ENCODE measurements at regions of chr2 and their contacts with region 1.

Region 1: DNA sequence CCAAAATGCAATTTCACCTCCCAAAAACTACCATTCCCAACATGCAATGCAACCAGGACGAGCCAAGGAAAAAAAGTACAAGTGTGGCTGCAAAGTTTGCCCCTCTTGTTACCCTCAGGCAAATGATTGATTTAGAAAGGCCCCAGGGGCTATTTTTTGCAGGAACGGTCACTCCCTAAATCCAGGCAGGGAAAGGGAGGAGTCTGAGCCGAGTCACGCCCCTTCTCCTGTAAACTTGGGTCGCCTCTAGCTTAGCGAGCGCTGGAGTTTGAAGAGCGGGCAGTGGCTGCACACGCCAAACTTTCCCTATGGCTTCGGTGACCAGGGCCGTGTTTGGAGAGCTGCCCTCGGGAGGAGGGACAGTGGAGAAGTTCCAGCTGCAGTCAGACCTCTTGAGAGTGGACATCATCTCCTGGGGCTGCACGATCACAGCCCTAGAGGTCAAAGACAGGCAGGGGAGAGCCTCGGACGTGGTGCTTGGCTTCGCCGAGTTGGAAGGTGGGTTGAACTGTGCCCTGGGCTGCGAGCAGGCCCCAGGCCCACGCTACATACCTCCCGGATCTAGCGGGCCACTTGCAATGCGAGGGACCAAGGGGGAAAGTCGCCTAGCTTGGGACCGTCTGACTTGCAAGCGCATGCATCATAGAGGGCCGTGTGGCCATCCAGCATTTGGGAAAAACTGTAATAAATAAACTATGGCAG is at the start of gene GALM:
- DNase-seq: peak in 13 of 14 experiments; percentile 10 to 75 (median 39)
- ATAC-seq: peak; percentile 28
- H3K4me3 ChIP-seq: peak within 1 kb of the TSS; percentile 81
- H3K4me3 Mint-ChIP-seq: peak within 1 kb of the TSS; percentile 80
- H3K27ac ChIP-seq: peak within 1 kb of the TSS; percentile 58 to 77
- H3K27ac Mint-ChIP-seq: peak within 1 kb of the TSS; percentile 81
- H3K4me1 ChIP-seq: peaks cover 75% of the 10 kb centered on the region
- H3K4me1 Mint-ChIP-seq: peaks cover 65% of the 10 kb centered on the region
- H3K27me3 ChIP-seq: no peaks in the 10 kb centered on the region
- H3K27me3 Mint-ChIP-seq: no peaks in the 10 kb centered on the region
- CTCF ChIP-seq: no peak
- total RNA-seq, gene GALM: 5.9 to 7.0 TPM

Region 2: DNA sequence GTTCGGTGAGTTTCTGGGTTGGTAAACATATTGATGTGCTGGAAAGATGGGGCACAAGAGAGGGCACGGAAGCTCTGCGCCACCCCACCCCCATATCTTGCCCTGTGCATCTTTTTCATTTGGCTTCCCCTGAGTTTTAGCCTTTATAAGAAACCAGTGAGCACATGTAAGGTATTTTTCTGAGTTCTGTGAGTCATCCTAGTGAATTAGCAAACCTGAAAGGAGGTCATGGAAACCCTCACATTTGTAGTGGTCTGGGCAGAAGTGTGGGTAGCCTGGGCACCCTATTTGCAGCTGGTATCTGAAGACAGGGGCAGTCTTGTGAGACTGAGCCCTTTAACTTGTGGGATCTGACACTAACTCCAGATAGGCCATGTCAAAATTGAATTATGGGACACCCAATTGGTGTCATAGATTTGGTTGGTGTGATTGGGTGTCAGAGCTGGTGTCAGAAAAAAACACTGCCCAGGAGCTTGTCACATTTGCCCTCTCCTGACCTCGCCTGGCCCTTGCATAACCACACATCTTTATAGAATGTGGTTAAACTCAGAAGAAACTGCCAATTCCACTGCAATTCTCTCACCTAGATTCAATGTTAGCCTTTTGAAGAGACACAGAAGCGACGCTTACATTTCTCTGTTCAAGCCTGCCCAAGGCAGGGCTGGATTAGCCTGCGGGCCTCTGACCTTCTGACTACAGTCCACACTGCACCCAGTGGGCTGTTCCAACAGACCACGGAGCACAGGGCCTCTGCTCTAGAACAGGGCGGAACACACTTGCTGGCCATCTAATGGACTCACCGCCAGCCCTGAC is 12.1 kb before region 1 on chr2:
- CTCF ChIA-PET with region 1: interaction called, 12 read pairs
- POLR2A ChIA-PET with region 1: interaction called, 32 read pairs
- intact Hi-C with region 1: no loop called
- DNase-seq: peak in 10 of 14 experiments; percentile 19 to 82 (median 52)
- ATAC-seq: peak; percentile 78
- H3K4me3 ChIP-seq: no peak overlapping the region
- H3K4me3 Mint-ChIP-seq: no peak overlapping the region
- H3K27ac ChIP-seq: peak overlapping the region in 1 of 2 donors; percentile 64
- H3K27ac Mint-ChIP-seq: peak overlapping the region; percentile 80
- H3K4me1 ChIP-seq: peaks cover 52% of the 10 kb centered on the region
- H3K4me1 Mint-ChIP-seq: peaks cover 33% of the 10 kb centered on the region
- H3K27me3 ChIP-seq: no peaks in the 10 kb centered on the region
- H3K27me3 Mint-ChIP-seq: no peaks in the 10 kb centered on the region
- CTCF ChIP-seq: no peak

Region 3: GRCh38 chr2:38682008-38682575 is 16.1 kb after region 1 on chr2:
- CTCF ChIA-PET with region 1: interaction called, 15 read pairs
- POLR2A ChIA-PET with region 1: interaction called, 47 read pairs
- intact Hi-C with region 1: loop called in 1 of 2 experiments (anchors 1 kb)
- DNase-seq: peak in 4 of 14 experiments; percentile 28 to 82 (median 76)
- ATAC-seq: peak; percentile 88
- H3K4me3 ChIP-seq: peak overlapping the region; percentile 31
- H3K4me3 Mint-ChIP-seq: peak overlapping the region; percentile 49
- H3K27ac ChIP-seq: peak overlapping the region; percentile 71 to 78
- H3K27ac Mint-ChIP-seq: peak overlapping the region; percentile 86
- H3K4me1 ChIP-seq: peaks cover 55% of the 10 kb centered on the region
- H3K4me1 Mint-ChIP-seq: peaks cover 50% of the 10 kb centered on the region
- H3K27me3 ChIP-seq: no peaks in the 10 kb centered on the region
- H3K27me3 Mint-ChIP-seq: no peaks in the 10 kb centered on the region
- CTCF ChIP-seq: peak; percentile 23

Region 4: DNA sequence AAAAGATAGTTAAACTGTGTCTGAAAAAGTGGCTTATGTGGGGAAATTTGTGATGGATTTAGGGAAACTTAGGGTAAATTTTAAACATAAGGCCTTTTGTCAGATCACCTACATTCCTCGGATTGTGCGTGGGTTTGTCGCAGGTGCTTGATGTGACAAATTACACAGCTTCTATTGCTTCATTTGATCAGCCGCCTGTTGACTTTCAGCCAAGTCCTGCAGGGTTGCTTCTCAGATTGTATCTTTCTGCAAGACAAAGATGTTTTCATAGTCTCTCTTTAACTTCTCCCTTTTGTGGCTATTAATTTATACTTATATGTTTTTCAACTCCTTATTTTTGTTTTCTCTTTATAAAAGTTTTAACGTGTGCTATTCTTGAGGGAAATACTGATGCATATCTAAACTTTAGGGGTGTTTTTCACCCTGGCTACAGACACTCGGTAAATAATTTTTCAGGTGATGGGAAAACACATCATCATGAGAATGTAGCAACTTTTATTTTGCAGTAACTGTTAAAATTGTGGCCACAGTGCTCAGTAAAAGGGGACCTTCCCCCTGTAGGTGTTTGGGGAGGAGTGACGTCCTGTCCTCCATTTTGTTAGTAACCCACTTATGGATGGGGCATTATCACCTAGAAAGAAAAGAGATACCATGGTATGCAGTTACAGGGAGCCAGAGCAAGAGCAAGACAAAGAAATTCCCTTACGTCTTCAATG is 31.3 kb after region 1 on chr2:
- CTCF ChIA-PET with region 1: no interaction called
- POLR2A ChIA-PET with region 1: interaction called, 12 read pairs
- intact Hi-C with region 1: no loop called
- DNase-seq: peak in 12 of 14 experiments; percentile 12 to 86 (median 50)
- ATAC-seq: peak; percentile 65
- H3K4me3 ChIP-seq: no peak overlapping the region
- H3K4me3 Mint-ChIP-seq: peak overlapping the region; percentile 54
- H3K27ac ChIP-seq: peak overlapping the region; percentile 47 to 63
- H3K27ac Mint-ChIP-seq: peak overlapping the region; percentile 90
- H3K4me1 ChIP-seq: peaks cover 79% of the 10 kb centered on the region
- H3K4me1 Mint-ChIP-seq: peaks cover 70% of the 10 kb centered on the region
- H3K27me3 ChIP-seq: no peaks in the 10 kb centered on the region
- H3K27me3 Mint-ChIP-seq: no peaks in the 10 kb centered on the region
- CTCF ChIP-seq: no peak

Region 5: GRCh38 chr2:38709567-38710194 is 43.7 kb after region 1 on chr2:
- CTCF ChIA-PET with region 1: no interaction called
- POLR2A ChIA-PET with region 1: interaction called, 20 read pairs
- intact Hi-C with region 1: loop called in 1 of 2 experiments (anchors 2 kb)
- DNase-seq: peak in 5 of 14 experiments; percentile 53 to 88 (median 78)
- ATAC-seq: peak; percentile 77
- H3K4me3 ChIP-seq: peak overlapping the region; percentile 2
- H3K4me3 Mint-ChIP-seq: peak overlapping the region; percentile 82
- H3K27ac ChIP-seq: peak overlapping the region; percentile 50 to 55
- H3K27ac Mint-ChIP-seq: peak overlapping the region; percentile 93
- H3K4me1 ChIP-seq: peaks cover 67% of the 10 kb centered on the region
- H3K4me1 Mint-ChIP-seq: peaks cover 72% of the 10 kb centered on the region
- H3K27me3 ChIP-seq: no peaks in the 10 kb centered on the region
- H3K27me3 Mint-ChIP-seq: no peaks in the 10 kb centered on the region
- CTCF ChIP-seq: no peak

Region 6: DNA sequence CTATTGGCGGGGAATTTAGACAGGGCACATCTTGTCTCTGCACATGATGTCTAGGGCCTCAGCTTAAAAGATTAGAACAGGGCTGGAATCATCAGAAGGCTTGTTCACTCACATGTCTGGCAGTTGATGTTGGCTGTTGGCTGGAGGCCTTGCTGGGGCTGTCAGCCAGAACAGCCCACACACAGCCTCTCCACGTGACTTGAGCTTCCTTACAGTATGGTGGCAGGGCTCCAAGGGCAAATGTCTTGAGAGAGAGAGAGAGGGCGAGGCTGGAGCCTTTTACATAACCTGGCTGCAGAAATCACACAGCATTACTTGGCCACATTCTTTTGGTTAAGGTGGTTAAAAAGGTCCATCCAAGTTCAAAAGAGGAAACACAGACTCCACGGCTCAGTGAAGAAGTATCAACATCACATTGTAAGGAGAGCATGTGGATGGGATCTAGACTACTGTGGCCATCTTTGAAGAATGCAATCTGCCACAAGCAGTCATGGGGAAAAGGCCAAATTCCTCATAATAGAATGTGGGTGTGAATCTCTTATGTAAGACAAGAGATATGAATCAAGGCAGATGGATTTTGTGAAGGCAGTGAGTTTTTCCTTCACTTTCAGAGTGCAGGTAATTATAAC is 54.7 kb after region 1 on chr2:
- CTCF ChIA-PET with region 1: interaction called, 12 read pairs
- POLR2A ChIA-PET with region 1: interaction called, 3 read pairs
- intact Hi-C with region 1: no loop called
- DNase-seq: no peak
- ATAC-seq: no peak
- H3K4me3 ChIP-seq: no peak overlapping the region
- H3K4me3 Mint-ChIP-seq: no peak overlapping the region
- H3K27ac ChIP-seq: peak overlapping the region in 1 of 2 donors; percentile 7
- H3K27ac Mint-ChIP-seq: peak overlapping the region; percentile 25
- H3K4me1 ChIP-seq: peaks cover 37% of the 10 kb centered on the region
- H3K4me1 Mint-ChIP-seq: peaks cover 53% of the 10 kb centered on the region
- H3K27me3 ChIP-seq: no peaks in the 10 kb centered on the region
- H3K27me3 Mint-ChIP-seq: no peaks in the 10 kb centered on the region
- CTCF ChIP-seq: no peak

Region 7: GRCh38 chr2:38788306-38788705 is 122.3 kb after region 1 on chr2:
- CTCF ChIA-PET with region 1: no interaction called
- POLR2A ChIA-PET with region 1: no interaction called
- intact Hi-C with region 1: no loop called
- DNase-seq: no peak
- ATAC-seq: no peak
- H3K4me3 ChIP-seq: no peak overlapping the region
- H3K4me3 Mint-ChIP-seq: no peak overlapping the region
- H3K27ac ChIP-seq: no peak overlapping the region
- H3K27ac Mint-ChIP-seq: no peak overlapping the region
- H3K4me1 ChIP-seq: no peaks in the 10 kb centered on the region
- H3K4me1 Mint-ChIP-seq: no peaks in the 10 kb centered on the region
- H3K27me3 ChIP-seq: no peaks in the 10 kb centered on the region
- H3K27me3 Mint-ChIP-seq: no peaks in the 10 kb centered on the region
- CTCF ChIP-seq: no peak